AG04450 (cell line): ENCODE measurements at regions of chr11 and their contacts with region 1.

Region 1: GRCh38 chr11:8099291-8099899 is 18.4 kb downstream of the TUB start:
- DNase-seq: peak; percentile 65
- H3K4me3 ChIP-seq: no peak overlapping the region
- H3K27ac ChIP-seq: no peak overlapping the region
- H3K27me3 ChIP-seq: no peaks in the 10 kb centered on the region
- CTCF ChIP-seq: peak; percentile 93

Region 2: GRCh38 chr11:7986768-7987559 is 112.4 kb before region 1 on chr11 and contains the start of gene EIF3F:
- CTCF ChIA-PET with region 1: interaction called, 30 read pairs
- POLR2A ChIA-PET with region 1: interaction called, 3 read pairs
- DNase-seq: peak; percentile 99
- H3K4me3 ChIP-seq: peak within 1 kb of the TSS; percentile 72
- H3K27ac ChIP-seq: peak within 1 kb of the TSS; percentile 53
- H3K27me3 ChIP-seq: no peaks in the 10 kb centered on the region
- CTCF ChIP-seq: peak; percentile 86
- polyA plus RNA-seq, gene EIF3F: 216 and 297 TPM in 2 replicates

Region 3: DNA sequence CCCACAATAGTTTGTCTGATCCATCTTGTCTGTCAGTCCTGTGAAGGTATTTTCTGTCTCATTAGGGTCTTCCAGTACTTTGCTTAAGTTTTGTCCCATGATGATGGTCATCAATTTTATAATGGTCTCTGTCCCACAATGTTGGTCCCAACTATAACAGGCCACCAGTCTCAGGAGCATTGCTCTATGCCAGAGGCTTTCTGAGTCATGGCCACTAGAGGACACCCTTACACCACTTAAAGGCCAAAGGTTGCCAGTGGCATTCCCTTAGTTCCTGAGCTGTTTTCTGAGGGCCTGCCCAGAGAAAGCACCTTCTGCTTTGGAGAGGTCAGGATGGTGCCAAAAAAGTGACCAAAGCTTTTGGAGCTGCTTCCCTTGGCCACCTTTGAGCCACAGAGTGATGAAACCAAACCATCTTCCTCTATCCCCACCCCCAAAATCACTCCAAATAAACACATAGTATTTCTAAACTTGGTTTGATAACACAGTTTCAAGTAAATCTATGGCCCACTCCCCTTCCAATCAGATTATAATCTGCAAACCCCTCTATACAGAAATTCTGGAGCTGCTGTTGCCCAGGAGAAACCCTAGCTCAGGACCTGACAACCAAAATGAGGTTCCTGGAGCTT is 92.9 kb before region 1 on chr11:
- CTCF ChIA-PET with region 1: interaction called, 992 read pairs
- POLR2A ChIA-PET with region 1: interaction called, 4 read pairs
- DNase-seq: peak; percentile 44
- H3K4me3 ChIP-seq: no peak overlapping the region
- H3K27ac ChIP-seq: no peak overlapping the region
- H3K27me3 ChIP-seq: peaks cover 5% of the 10 kb centered on the region
- CTCF ChIP-seq: peak; percentile 96

Region 4: DNA sequence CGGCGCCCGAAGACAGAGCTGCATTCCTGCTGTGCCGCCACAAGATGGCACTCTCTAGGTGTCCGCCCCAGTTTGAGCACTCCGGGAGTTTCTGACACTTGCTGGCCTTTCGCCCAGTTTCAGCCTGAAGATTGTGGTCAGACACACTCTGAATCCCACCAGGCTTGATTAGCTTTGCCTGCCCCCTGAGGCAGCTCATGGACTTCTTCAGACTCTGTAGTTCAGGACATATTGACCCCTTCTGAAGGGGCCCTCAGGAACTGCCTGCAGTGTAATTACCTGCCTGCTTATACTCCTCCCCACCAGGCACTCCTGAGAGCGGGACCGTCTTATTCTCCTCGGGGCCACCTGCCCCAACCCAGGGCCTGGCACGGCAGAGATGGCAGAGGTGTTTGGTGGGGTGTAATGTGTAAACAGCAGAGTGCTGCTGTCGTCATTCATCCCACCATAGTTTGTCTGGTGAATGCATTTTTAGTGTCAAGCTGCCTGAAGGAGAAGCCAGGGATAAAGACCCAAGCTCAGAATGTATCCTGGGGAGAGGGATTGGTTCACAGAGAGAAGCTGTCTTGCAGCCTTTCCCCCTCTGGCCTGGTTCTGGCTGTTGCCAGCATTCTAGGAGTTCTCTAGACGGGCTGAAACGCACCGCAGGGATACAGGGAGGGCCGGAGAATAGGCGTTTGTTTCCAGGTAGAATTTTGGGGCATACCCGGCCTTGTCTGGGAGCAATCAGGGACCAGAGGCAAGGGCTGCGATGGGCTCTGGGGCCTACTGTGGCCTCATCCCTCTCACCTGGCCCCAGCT is 65.9 kb before region 1 on chr11:
- CTCF ChIA-PET with region 1: interaction called, 384 read pairs
- POLR2A ChIA-PET with region 1: no interaction called
- DNase-seq: peak; percentile 70
- H3K4me3 ChIP-seq: no peak overlapping the region
- H3K27ac ChIP-seq: no peak overlapping the region
- H3K27me3 ChIP-seq: no peaks in the 10 kb centered on the region
- CTCF ChIP-seq: peak; percentile 89

Region 5: GRCh38 chr11:8080674-8081590 is 18.5 kb before region 1 on chr11 and contains the start of gene TUB:
- CTCF ChIA-PET with region 1: interaction called, 63 read pairs
- POLR2A ChIA-PET with region 1: interaction called, 4 read pairs
- DNase-seq: no peak
- H3K4me3 ChIP-seq: peak within 1 kb of the TSS; percentile 65
- H3K27ac ChIP-seq: peak within 1 kb of the TSS; percentile 21
- H3K27me3 ChIP-seq: peaks cover 2% of the 10 kb centered on the region
- CTCF ChIP-seq: no peak
- polyA plus RNA-seq, gene TUB: 13.9 and 14.7 TPM in 2 replicates

Region 6: DNA sequence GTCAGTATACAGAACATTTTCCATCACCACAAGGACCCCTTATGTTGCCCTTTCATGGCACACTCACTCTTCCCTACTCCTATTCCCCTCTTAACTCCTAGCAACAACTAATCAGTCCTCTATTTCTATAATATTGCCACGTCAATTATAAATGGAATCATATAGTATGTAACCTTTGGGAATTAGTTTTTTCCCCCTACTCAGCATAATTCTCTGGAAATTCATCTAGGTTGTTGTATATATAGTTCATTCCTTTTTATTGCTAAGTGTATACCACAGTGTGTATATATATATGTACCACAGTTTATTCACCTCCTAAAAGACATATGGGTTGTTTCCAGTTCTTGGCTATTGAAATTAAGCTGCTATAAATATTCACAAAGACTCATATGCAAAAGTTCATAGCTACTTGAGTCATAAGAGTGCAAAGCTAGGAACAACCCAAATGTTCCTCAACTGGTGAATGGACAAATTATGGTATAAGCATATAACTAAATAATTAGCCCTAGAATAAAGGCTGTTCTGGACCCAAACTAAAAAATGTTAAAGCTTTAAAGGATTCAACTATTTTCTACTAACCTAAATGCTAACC is 22.9 kb after region 1 on chr11:
- CTCF ChIA-PET with region 1: interaction called, 30 read pairs
- POLR2A ChIA-PET with region 1: no interaction called
- DNase-seq: no peak
- H3K4me3 ChIP-seq: no peak overlapping the region
- H3K27ac ChIP-seq: no peak overlapping the region
- H3K27me3 ChIP-seq: peaks cover 2% of the 10 kb centered on the region
- CTCF ChIP-seq: no peak

Region 7: DNA sequence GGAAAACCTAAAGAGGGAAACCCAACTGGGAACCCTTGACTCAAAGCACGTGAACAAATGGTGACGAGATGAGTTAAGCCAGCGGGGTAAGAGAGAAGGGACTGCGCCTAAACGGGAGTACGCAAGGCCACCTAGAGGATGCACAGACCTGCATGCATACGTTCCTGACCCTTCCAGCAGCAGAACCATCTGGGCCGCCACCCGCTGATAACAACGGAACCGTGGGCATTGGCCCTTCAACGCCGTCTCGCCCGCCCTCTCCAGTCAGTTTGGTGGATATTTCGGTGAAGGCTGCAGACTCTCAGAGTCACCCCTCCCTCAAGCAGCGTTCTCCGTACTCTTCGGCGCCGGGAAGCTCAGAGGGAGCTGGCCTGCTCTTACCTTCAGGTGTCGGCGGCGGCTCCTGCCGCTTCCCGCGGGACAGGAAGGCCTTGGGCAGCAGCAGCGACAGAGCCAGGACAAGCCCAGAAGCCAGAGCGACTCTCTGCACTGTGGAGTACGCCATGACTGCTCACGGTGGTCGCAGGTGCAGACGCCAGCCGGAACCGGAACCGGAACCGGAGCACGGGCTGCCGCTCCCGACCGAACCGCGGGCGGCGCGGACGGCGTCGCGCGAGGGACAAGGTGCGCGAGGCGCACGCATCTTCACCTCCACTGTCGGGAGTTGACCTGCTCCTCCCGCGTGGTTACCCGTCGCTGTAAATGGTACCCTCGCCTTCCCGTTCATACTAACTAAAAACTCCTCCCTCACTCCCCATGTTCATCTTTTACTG is 69.3 kb after region 1 on chr11 and contains the start of gene RIC3:
- CTCF ChIA-PET with region 1: no interaction called
- POLR2A ChIA-PET with region 1: no interaction called
- DNase-seq: no peak
- H3K4me3 ChIP-seq: no peak within 1 kb of the TSS
- H3K27ac ChIP-seq: no peak within 1 kb of the TSS
- H3K27me3 ChIP-seq: peaks cover 21% of the 10 kb centered on the region
- CTCF ChIP-seq: no peak
- polyA plus RNA-seq, gene RIC3: not detected in 2 replicates

Region 8: GRCh38 chr11:8247312-8247711 is 147.9 kb after region 1 on chr11:
- CTCF ChIA-PET with region 1: no interaction called
- POLR2A ChIA-PET with region 1: no interaction called
- DNase-seq: no peak
- H3K4me3 ChIP-seq: no peak overlapping the region
- H3K27ac ChIP-seq: no peak overlapping the region
- H3K27me3 ChIP-seq: peaks cover 19% of the 10 kb centered on the region
- CTCF ChIP-seq: peak; percentile 41